H1 (cell line): ENCODE measurements at regions of chr10 and their contacts with region 1.

Region 1: GRCh38 chr10:99461230-99461629 is 30.8 kb upstream of the GOT1 start:
- DNase-seq: no peak
- H3K4me3 ChIP-seq: no peak overlapping the region
- H3K27ac ChIP-seq: no peak overlapping the region
- H3K4me1 ChIP-seq: no peaks in the 10 kb centered on the region
- H3K27me3 ChIP-seq: peaks cover 0 to 1% (median 0%) of the 10 kb centered on the region in 4 experiments; a peak in 1 of 7 replicates
- CTCF ChIP-seq: no peak
- EP300 ChIP-seq: no peak
- POLR2A ChIP-seq: no peak
- RAD21 ChIP-seq: no peak

Region 2: DNA sequence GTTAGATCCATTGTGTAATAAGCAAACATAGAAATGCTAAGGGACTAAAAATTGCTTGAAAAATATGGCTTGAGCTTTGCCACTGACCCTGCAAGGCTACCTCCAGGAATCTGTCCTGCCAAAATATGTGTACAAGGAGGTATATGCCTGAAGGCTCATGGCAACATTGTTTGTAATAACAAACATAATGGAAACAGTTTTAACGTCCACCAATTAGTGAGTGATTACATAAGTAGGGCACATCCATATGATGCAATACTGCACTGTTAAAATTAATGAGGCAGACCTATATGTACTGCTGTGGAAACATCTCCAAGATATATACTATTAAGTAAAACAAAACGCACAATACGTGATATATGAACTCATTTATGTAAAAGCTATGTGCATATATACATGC is 17.7 kb before region 1 on chr10:
- CTCF ChIA-PET with region 1: interaction called, 11 read pairs
- POLR2A ChIA-PET with region 1: no interaction called
- DNase-seq: no peak
- H3K4me3 ChIP-seq: no peak overlapping the region
- H3K27ac ChIP-seq: no peak overlapping the region
- H3K4me1 ChIP-seq: 0 out of 7 replicates have a peak, but pooled peaks cover 0 to 2% (median under 1%) of the 10 kb centered on the region in 4 experiments
- H3K27me3 ChIP-seq: no peaks in the 10 kb centered on the region
- CTCF ChIP-seq: no peak
- EP300 ChIP-seq: no peak
- POLR2A ChIP-seq: no peak
- RAD21 ChIP-seq: no peak

Region 3: GRCh38 chr10:99497343-99498025 is 36.3 kb after region 1 on chr10:
- CTCF ChIA-PET with region 1: no interaction called
- POLR2A ChIA-PET with region 1: no interaction called
- DNase-seq: no peak
- H3K4me3 ChIP-seq: no peak overlapping the region
- H3K27ac ChIP-seq: no peak overlapping the region
- H3K4me1 ChIP-seq: no peaks in the 10 kb centered on the region
- H3K27me3 ChIP-seq: peaks cover 0 to 2% (median 0%) of the 10 kb centered on the region in 4 experiments; a peak in 1 of 7 replicates
- CTCF ChIP-seq: no peak
- EP300 ChIP-seq: no peak
- POLR2A ChIP-seq: no peak
- RAD21 ChIP-seq: no peak

Region 4: DNA sequence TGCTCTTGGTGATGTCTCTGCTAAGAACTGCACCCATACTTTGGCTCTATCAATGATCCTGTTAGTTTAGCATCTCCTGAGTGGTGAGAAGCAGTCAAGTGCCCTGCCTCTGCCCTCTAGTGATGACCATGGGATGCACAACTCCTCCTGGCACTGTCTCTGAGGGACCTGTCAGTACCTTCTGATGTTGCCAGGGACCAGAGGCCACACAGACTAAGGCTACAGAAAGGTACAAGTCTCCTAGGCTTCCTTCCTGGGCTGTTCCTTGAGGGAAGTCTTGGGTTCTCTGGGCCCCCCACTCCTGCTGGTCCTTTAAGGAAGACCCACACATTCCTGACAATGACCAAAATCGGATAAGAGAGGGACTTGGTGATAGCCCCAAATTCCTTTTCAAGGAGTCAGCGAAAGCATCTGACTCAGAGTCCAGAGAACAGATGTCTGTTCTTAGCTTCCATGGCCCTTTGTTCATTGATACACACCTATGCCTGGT is 86.9 kb after region 1 on chr10:
- CTCF ChIA-PET with region 1: interaction called, 10 read pairs
- POLR2A ChIA-PET with region 1: no interaction called
- DNase-seq: no peak
- H3K4me3 ChIP-seq: no peak overlapping the region
- H3K27ac ChIP-seq: no peak overlapping the region
- H3K4me1 ChIP-seq: no peaks in the 10 kb centered on the region; a peak in 1 of 7 replicates
- H3K27me3 ChIP-seq: peaks cover 4 to 33% (median 21%) of the 10 kb centered on the region in 4 experiments
- CTCF ChIP-seq: peak; percentile 62 to 82 (median 78)
- EP300 ChIP-seq: no peak
- POLR2A ChIP-seq: no peak
- RAD21 ChIP-seq: peak; percentile 67 to 77